Endothelial cell of umbilical vein (primary cell): ENCODE measurements at regions of chr12 and their contacts with region 1.

Region 1: GRCh38 chr12:53561590-53561953 is 54.3 kb upstream of the NPFF start:
- DNase-seq: peak; percentile 93
- H3K4me3 ChIP-seq: peak overlapping the region in 1 of 3 experiments; percentile 19
- H3K27ac ChIP-seq: peak overlapping the region; percentile 96
- H3K4me1 ChIP-seq: peaks cover 28% of the 10 kb centered on the region
- H3K27me3 ChIP-seq: no peaks in the 10 kb centered on the region
- CTCF ChIP-seq: no peak
- POLR2A ChIP-seq: no peak

Region 2: GRCh38 chr12:52041695-52042123 is 1519.9 kb before region 1 on chr12:
- CTCF ChIA-PET with region 1: no interaction called
- POLR2A ChIA-PET with region 1: no interaction called
- dilution Hi-C with region 1: no loop called
- intact Hi-C with region 1: no loop called
- DNase-seq: no peak
- H3K4me3 ChIP-seq: no peak overlapping the region
- H3K27ac ChIP-seq: no peak overlapping the region
- H3K4me1 ChIP-seq: peaks cover 33% of the 10 kb centered on the region
- H3K27me3 ChIP-seq: no peaks in the 10 kb centered on the region
- CTCF ChIP-seq: no peak
- POLR2A ChIP-seq: no peak

Region 3: GRCh38 chr12:52372216-52373154 is 1189.1 kb before region 1 on chr12:
- CTCF ChIA-PET with region 1: no interaction called
- POLR2A ChIA-PET with region 1: no interaction called
- dilution Hi-C with region 1: no loop called
- intact Hi-C with region 1: no loop called
- DNase-seq: peak; percentile 73
- H3K4me3 ChIP-seq: no peak overlapping the region
- H3K27ac ChIP-seq: no peak overlapping the region
- H3K4me1 ChIP-seq: no peaks in the 10 kb centered on the region
- H3K27me3 ChIP-seq: peaks cover 13 to 19% of the 10 kb centered on the region in 2 experiments
- CTCF ChIP-seq: peak; percentile 69 to 77
- POLR2A ChIP-seq: no peak

Region 4: DNA sequence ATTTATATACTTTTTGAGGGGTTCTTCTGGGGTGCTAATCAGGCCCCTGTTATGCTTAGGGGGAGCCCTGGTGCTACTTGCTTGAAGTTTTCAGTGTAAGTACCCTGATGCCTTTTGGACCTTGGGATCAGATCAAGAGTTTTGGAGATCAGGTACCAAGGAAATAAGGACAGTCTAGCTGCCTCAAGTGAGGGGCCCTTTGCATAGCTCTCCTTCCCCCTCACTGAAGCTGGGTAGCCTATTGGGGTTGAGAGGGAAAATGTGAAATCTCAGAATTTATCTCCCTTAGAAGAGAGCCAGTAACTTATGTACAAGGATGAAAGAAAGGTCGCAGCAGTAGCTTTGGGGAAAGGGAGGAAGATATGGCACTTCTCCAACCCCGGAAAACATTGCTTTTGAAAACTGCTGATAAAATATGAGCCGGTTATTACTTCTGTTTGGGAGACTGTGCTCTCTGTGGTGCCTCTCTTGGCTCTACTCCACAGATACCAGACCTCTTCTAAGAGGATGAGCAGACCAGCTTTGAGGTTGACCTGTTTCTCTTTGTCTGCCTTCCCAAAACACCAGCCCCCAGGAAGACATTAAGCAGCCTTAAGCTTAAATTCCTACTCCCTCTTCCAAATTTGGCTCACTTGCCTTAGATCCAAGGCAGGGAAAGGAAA is 146.7 kb before region 1 on chr12:
- CTCF ChIA-PET with region 1: no interaction called
- POLR2A ChIA-PET with region 1: no interaction called
- dilution Hi-C with region 1: no loop called
- intact Hi-C with region 1: no loop called
- DNase-seq: peak; percentile 32
- H3K4me3 ChIP-seq: no peak overlapping the region
- H3K27ac ChIP-seq: no peak overlapping the region
- H3K4me1 ChIP-seq: peaks cover 24% of the 10 kb centered on the region
- H3K27me3 ChIP-seq: no peaks in the 10 kb centered on the region
- CTCF ChIP-seq: no peak
- POLR2A ChIP-seq: no peak

Region 5: DNA sequence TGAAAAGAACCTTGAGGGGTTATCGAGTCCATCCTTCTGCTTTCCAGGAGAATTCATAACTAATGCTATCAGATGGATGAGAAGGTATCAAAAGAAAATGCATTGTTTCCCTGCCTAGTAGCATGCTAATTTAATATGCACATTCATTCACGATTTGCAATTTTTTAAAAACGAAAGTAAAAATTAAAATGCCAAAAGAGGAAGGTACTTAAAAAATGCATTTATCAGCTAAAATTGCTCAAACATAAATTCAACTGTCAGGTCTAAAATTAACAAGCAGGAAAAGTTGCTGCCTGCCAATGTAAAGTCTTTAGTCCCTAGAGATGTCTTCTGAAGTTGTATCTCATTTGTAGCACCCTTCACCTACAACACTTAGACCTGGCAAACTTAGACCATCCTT is 56.7 kb after region 1 on chr12:
- CTCF ChIA-PET with region 1: interaction called, 3 read pairs
- POLR2A ChIA-PET with region 1: no interaction called
- dilution Hi-C with region 1: no loop called
- intact Hi-C with region 1: loop called (anchors 2 kb)
- DNase-seq: no peak
- H3K4me3 ChIP-seq: peak overlapping the region in 2 of 3 experiments; percentile 49 to 67
- H3K27ac ChIP-seq: peak overlapping the region; percentile 76
- H3K4me1 ChIP-seq: peaks cover 36% of the 10 kb centered on the region
- H3K27me3 ChIP-seq: no peaks in the 10 kb centered on the region
- CTCF ChIP-seq: no peak
- POLR2A ChIP-seq: no peak

Region 6: GRCh38 chr12:53701518-53702260 is 140.1 kb after region 1 on chr12:
- CTCF ChIA-PET with region 1: no interaction called
- POLR2A ChIA-PET with region 1: no interaction called
- dilution Hi-C with region 1: no loop called
- intact Hi-C with region 1: no loop called
- DNase-seq: peak; percentile 69
- H3K4me3 ChIP-seq: no peak overlapping the region
- H3K27ac ChIP-seq: no peak overlapping the region
- H3K4me1 ChIP-seq: no peaks in the 10 kb centered on the region
- H3K27me3 ChIP-seq: peaks cover 57 to 72% of the 10 kb centered on the region in 2 experiments
- CTCF ChIP-seq: peak; percentile 95 to 96
- POLR2A ChIP-seq: no peak